MCF 10A (cell line): ENCODE measurements at regions of chr12 and their contacts with region 1.

Region 1: DNA sequence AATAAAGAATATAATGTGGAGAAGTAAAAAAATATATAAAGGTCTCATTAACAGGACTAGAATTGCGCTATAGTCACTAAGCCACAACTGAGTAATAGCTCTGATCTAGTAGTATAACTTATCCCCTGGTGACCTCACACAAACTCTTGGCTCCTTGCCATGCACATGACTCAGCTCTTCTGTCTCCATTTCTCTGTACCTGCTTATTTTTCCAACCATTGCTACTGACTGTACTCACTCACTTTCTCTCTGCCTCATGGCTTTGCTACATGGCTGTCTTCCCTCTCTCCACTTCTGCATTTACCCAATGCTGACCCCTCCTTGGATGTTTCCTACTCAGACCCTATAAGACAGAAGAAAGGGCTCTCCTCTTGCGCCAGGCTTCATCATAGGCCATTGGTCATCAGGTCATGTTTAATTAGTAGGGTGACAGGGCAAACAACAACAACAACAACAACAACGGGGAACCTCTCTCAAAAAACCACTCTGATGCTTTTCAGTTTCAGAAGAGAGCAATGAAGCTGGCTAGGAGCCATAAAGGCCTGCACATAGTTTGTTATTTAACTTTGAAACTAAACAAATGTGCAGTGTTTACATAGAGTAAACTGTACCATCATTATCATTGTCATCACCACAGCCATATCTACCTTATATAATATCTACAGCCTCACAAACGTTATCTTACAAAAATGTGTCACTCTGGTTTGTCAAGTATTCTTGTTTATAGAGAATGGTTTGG is 25.6 kb upstream of the KRAS start:
- DNase-seq: peak; percentile 95
- H3K4me3 Mint-ChIP-seq: no peak overlapping the region
- H3K27ac Mint-ChIP-seq: peak overlapping the region; percentile 10
- H3K4me1 Mint-ChIP-seq: peaks cover 6% of the 10 kb centered on the region
- H3K27me3 Mint-ChIP-seq: no peaks in the 10 kb centered on the region
- CTCF ChIP-seq: no peak

Region 2: GRCh38 chr12:25332143-25332542 is 55.8 kb after region 1 on chr12:
- CTCF ChIA-PET with region 1: interaction called, 3 read pairs
- POLR2A ChIA-PET with region 1: no interaction called
- intact Hi-C with region 1: loop called (anchors 5 kb)
- DNase-seq: no peak
- H3K4me3 Mint-ChIP-seq: no peak overlapping the region
- H3K27ac Mint-ChIP-seq: no peak overlapping the region
- H3K4me1 Mint-ChIP-seq: no peaks in the 10 kb centered on the region
- H3K27me3 Mint-ChIP-seq: peaks cover 14% of the 10 kb centered on the region
- CTCF ChIP-seq: no peak